Head of caudate nucleus (tissue), 42 donors: ENCODE measurements at regions of chr17 and their contacts with region 1.

Region 1: DNA sequence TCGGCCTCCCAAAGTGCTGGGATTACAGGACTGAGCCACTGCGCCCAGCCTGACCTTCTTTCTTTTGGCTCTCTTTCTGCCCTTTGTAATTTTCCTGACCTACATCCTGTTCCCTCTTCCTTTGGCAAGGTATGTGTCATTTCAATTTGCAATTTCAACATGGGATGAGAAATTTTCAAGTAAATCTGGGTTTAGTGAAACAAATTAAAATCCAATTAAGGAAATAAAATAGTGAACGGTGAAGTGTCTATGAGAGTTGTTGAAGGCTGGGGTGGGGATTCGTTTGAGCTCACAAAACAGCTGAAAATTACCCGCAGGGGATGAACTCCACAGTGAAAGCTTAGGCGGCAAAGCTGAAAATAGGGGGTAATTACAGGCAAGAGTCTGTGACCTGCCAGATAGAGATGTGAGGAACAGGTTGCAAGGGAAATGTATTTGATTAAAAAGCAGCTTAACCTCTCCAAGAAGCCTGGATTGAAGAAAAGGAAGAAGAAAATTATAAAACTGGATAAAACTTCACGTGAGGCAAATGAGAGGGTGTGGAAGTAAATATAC is 277.7 kb downstream of the UTP18 start:
- DNase-seq: peak in 3 of 42 donors; percentile 8 to 17 (median 10)

Region 2: DNA sequence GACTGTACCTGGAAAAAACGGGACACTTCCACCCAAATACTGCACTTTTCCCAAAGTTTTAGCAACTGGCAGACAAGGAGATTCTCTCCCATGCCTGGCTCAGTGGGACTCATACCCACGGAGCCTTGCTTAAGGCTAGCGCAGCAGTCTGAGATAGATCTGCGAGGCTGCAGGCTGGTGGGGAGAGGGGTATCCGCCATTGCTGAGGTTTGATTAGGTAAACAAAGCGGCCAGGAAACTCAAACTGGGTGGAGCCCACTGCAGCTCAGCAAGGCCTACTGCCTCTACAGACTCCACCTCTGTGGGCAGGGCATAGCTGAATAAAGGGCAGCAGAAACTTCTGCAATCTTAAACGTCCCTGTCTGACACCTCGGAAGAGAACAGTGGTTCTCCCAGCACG is 232.9 kb before region 1 on chr17:
- intact Hi-C with region 1: loop called (anchors 10 kb)
- DNase-seq: no peak

Region 3: DNA sequence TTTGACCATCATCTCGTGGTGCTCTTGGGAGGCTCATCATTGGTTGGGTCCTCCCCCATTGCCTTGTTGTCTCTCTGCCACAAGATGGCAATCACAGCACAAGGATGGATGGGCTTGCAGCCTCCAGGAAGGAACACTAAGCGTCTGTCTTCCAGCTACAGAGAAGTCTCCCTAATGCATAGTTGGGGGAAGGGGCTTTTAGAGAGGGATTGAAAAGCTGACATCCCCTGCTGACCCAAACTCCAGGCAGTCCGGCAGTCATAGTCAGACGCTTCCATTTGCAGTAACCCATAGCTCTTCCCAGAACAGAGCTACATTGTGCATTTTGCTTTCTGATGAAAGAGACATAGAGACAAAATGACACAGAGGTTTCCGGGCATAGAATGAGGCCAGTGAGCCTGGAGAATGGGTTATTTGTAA is 166.3 kb before region 1 on chr17:
- intact Hi-C with region 1: loop called (anchors 2 kb)
- DNase-seq: peak; percentile 57 to 94 (median 83)

Region 4: GRCh38 chr17:51601622-51602261 is 63.7 kb after region 1 on chr17:
- intact Hi-C with region 1: no loop called
- DNase-seq: no peak

Region 5: GRCh38 chr17:51703361-51704341 is 165.6 kb after region 1 on chr17:
- intact Hi-C with region 1: no loop called
- DNase-seq: no peak